ENCODE measurements at regions of chr4 and their contacts with region 1.

Region 1: GRCh38 chr4:73258686-73259570 is at the start of gene ANKRD17:
- DNase-seq: peak; percentile 93
- H3K4me3 ChIP-seq: peak within 1 kb of the TSS; percentile 71 to 97 (median 90)
- H3K27ac ChIP-seq: peak within 1 kb of the TSS; percentile 94 to 98 (median 97)
- H3K4me1 ChIP-seq: peaks cover 19 to 31% of the 10 kb centered on the region in 2 donors
- H3K27me3 ChIP-seq: no peaks in the 10 kb centered on the region
- CTCF ChIP-seq: peak in 4 of 6 experiments; percentile 30 to 38 (median 32)
- POLR2A ChIP-seq: peak; percentile 10 to 74
- total RNA-seq, gene ANKRD17: 46.8 to 74.6 (median 64.2) TPM

Region 2: DNA sequence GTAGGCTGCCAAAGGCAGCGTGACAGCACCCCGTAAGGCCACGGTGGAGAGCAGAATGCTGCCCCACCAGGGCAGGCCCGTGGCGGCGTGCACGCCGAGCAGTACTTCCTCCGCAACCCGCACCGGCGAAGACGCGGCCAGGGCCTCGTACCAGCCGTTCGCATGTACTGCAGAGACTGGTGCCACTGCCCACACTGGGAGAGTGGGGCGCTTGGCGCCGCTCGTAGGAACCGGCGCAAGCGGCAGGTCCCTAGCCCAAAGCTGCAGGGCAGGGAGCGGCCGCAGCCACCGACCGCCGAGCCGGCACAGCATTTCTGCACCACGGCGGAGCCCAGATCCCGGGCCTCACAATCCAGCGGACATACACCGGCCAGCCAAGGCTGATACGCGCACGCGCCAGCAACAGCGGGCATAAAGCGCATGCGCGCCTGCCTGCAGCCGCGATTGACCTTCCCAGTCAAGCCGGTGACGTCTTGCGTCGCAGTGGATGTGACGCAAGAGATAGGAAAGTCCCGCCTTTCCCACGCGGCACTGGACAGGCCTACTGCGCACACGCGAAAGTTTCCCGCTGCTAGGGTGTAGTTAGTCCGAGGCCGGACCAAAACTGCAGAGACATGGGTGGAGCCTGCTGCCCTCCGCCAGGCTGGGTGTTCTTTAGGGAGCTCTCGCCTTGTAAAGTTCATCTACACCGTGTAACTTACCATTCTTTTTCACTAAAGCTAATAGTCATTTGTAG is 189.4 kb before region 1 on chr4 and contains the start of gene COX18:
- intact Hi-C with region 1: loop called (anchors 5 kb)
- DNase-seq: peak; percentile 98 to 99
- H3K4me3 ChIP-seq: peak within 1 kb of the TSS; percentile 35 to 91 (median 91)
- H3K27ac ChIP-seq: peak within 1 kb of the TSS; percentile 46 to 96 (median 89)
- H3K4me1 ChIP-seq: peaks cover 0 to 6% of the 10 kb centered on the region in 2 donors
- H3K27me3 ChIP-seq: no peaks in the 10 kb centered on the region
- CTCF ChIP-seq: peak in 1 of 6 experiments; percentile 14
- POLR2A ChIP-seq: peak; percentile 40 to 95
- total RNA-seq, gene COX18: 21.2 to 37.2 (median 24.9) TPM